Activated CD4-positive, alpha-beta T cell treated with anti-CD3 and anti-CD28 coated beads, Interleukin-2, amount 10 ng/mL, durations not matched to agents 7 days and 5 days (primary cell): ENCODE measurements at regions of chr1 and their contacts with region 1.

Region 1: DNA sequence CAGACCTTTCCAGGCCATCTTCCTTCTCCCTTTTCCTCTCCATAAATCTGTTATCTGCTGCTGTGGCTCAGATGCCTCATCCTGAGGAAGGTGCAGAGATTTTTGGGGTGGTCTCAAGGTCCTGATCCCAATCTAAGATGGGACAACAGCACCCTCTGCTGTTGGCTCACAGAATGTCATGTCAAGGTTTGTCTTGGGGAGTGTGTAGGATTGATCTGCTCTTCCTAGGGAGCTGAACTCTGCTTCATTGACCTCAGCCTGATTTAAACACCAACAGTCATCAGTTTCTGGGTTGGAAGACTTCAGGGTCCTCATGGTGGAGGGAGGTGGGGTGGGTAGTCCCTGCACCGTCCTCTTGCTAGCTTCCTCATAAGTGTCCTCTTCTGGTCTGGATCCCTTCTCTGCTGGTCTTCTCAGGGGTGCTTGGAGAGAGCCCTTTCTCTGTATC is 62.8 kb upstream of the LAX1 start:
- DNase-seq: peak; percentile 63
- H3K4me3 Mint-ChIP-seq: no peak overlapping the region
- H3K27ac Mint-ChIP-seq: peak overlapping the region; percentile 42
- H3K4me1 Mint-ChIP-seq: peaks cover 28% of the 10 kb centered on the region
- H3K27me3 Mint-ChIP-seq: no peaks in the 10 kb centered on the region

Region 2: DNA sequence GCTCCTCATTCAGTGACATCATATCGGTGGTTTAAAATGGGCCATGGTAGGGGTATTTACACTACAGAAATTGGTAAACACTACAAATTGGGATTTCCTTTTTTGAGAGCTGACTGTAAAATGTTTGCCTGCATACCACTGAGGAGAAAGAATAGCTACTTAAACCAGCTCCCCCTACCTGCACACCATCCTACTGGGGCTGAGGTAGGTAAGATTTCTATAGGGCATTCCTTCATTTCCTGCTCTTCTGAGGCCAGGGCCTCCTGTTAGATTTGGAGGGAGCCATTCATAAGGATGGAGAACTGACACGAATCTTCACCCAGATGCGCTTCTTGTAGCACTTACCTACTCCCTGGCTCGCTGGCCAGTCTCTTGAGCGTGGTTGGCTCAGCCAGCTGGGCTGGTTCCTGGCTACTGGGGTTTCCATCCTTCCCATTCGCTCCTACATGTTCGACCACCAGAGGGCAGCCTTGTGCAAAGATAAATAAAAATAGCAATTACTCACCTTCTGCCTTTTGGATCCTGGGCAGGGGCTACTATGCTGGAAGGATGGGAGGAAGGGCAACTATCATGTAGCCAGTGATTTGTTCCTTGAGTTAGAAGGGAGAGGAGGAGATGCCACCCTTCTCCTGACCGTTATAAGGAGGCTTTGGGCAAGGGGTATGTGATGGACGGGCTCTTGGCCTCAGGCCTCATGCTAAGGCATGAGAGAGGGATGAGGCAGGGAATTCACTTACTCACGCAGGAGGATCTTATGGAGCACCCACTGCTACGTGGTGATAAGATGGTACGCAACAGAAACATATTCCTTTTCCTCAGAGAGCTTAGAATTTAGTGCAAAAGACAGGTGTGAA is 197.5 kb before region 1 on chr1:
- CTCF ChIA-PET with region 1: interaction called, 22 read pairs
- POLR2A ChIA-PET with region 1: no interaction called
- DNase-seq: peak; percentile 79
- H3K4me3 Mint-ChIP-seq: no peak overlapping the region
- H3K27ac Mint-ChIP-seq: no peak overlapping the region
- H3K4me1 Mint-ChIP-seq: no peaks in the 10 kb centered on the region
- H3K27me3 Mint-ChIP-seq: peaks cover 3% of the 10 kb centered on the region

Region 3: GRCh38 chr1:203776636-203777035 is 74.5 kb after region 1 on chr1:
- CTCF ChIA-PET with region 1: no interaction called
- POLR2A ChIA-PET with region 1: no interaction called
- DNase-seq: no peak
- H3K4me3 Mint-ChIP-seq: no peak overlapping the region
- H3K27ac Mint-ChIP-seq: no peak overlapping the region
- H3K4me1 Mint-ChIP-seq: peaks cover 3% of the 10 kb centered on the region
- H3K27me3 Mint-ChIP-seq: no peaks in the 10 kb centered on the region